T-cell (primary cell): ENCODE measurements at regions of chr6 and their contacts with region 1.

Region 1: GRCh38 chr6:152804150-152804549 is 53.6 kb downstream of the VIP start:
- DNase-seq: no peak
- ATAC-seq: no peak
- H3K4me3 ChIP-seq: no peak overlapping the region
- H3K4me3 Mint-ChIP-seq: no peak overlapping the region
- H3K27ac ChIP-seq: no peak overlapping the region
- H3K27ac Mint-ChIP-seq: no peak overlapping the region
- H3K4me1 ChIP-seq: no peaks in the 10 kb centered on the region
- H3K4me1 Mint-ChIP-seq: no peaks in the 10 kb centered on the region
- H3K27me3 ChIP-seq: no peaks in the 10 kb centered on the region
- H3K27me3 Mint-ChIP-seq: peaks cover 3 to 18% of the 10 kb centered on the region in 2 donors

Region 2: DNA sequence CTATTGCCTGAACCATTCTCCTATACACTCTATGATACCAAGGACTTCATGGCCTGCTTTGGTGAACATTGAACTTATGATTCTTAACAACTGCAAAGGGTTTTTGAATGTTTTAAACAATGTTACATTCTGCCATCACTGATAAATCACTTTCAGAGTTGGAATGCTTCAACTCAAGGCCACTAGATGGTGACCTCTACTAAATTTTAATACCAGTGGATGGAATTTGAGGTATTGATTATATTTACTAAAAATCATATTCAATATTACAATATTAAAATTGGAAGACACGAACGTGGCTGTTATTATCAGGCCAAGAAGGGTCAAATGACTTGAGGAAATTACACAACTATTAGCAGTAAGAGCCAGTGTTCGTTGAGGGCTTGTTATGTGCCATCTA is 87.8 kb before region 1 on chr6:
- CTCF ChIA-PET with region 1: no interaction called
- POLR2A ChIA-PET with region 1: interaction called in 1 of 2 experiments, 15 read pairs
- DNase-seq: no peak
- ATAC-seq: no peak
- H3K4me3 ChIP-seq: no peak overlapping the region
- H3K4me3 Mint-ChIP-seq: no peak overlapping the region
- H3K27ac ChIP-seq: no peak overlapping the region
- H3K27ac Mint-ChIP-seq: no peak overlapping the region
- H3K4me1 ChIP-seq: no peaks in the 10 kb centered on the region
- H3K4me1 Mint-ChIP-seq: no peaks in the 10 kb centered on the region
- H3K27me3 ChIP-seq: no peaks in the 10 kb centered on the region
- H3K27me3 Mint-ChIP-seq: no peaks in the 10 kb centered on the region

Region 3: DNA sequence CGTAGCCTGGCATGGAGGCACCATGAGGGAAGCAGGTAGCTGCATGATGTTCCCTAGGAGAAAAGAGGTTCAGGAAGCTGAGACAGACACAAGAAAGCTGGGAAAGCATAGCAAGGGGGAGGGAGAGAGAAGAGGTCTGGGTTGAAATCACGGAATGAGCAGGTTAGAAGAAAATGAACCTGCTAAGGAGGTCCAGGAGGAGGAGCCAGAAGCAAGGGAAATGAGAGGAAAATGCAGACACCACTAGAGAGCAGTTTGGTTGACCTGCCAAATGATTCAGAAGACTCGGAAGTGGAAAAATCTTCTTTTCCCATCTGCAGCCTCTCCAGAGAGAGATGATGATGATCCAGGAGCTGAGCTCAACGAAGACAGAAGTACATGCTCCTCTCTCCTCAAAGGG is 17.4 kb after region 1 on chr6:
- CTCF ChIA-PET with region 1: no interaction called
- POLR2A ChIA-PET with region 1: no interaction called
- DNase-seq: no peak
- ATAC-seq: no peak
- H3K4me3 ChIP-seq: no peak overlapping the region
- H3K4me3 Mint-ChIP-seq: no peak overlapping the region
- H3K27ac ChIP-seq: no peak overlapping the region
- H3K27ac Mint-ChIP-seq: no peak overlapping the region
- H3K4me1 ChIP-seq: no peaks in the 10 kb centered on the region
- H3K4me1 Mint-ChIP-seq: no peaks in the 10 kb centered on the region
- H3K27me3 ChIP-seq: no peaks in the 10 kb centered on the region
- H3K27me3 Mint-ChIP-seq: peaks cover 4 to 9% of the 10 kb centered on the region in 2 donors

Region 4: DNA sequence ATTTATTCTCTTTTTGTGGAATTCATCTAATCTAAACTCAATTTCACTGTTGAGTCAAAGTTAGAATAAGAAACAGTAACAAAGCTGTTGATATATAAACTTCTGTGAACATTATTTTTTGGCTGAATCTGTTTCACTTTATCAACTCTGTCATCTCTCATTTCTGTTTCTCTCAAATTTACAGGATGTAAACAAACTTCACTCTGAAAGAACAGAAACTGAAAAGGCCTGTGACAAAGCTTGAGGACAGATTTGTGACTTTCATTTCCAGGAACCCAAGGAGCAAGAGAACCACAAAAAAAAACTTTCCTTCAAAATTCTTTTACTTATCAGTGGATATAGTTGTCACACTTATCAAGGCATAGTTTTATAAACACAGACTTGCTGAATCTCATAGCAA is 787.0 kb after region 1 on chr6:
- CTCF ChIA-PET with region 1: no interaction called
- POLR2A ChIA-PET with region 1: no interaction called
- DNase-seq: no peak
- ATAC-seq: no peak
- H3K4me3 ChIP-seq: no peak overlapping the region
- H3K4me3 Mint-ChIP-seq: no peak overlapping the region
- H3K27ac ChIP-seq: no peak overlapping the region
- H3K27ac Mint-ChIP-seq: no peak overlapping the region
- H3K4me1 ChIP-seq: no peaks in the 10 kb centered on the region
- H3K4me1 Mint-ChIP-seq: peaks cover 0 to 5% (median 0%) of the 10 kb centered on the region in 3 donors
- H3K27me3 ChIP-seq: no peaks in the 10 kb centered on the region
- H3K27me3 Mint-ChIP-seq: no peaks in the 10 kb centered on the region